ENCODE measurements at regions of chr3 and their contacts with region 1.

Region 1: DNA sequence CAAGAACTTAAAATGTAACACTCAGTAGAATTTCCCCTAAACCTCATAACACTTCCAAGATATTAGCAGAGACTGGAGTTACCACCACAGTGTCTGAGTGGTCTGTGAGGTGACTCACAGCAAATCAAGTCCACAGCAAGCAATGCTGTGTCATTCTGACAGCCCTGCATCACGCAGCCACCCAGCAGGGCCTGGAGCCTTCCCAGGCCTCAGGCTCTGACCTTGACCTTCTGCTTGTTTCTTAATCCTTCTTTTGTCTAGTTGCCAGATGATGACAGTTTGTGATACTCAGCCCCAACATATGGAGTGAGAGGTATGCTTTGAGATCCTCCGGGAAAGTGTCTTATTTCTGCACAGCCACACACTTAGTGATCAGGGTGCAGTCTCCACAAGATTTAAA is 82.5 kb downstream of the TOP2B start:
- DNase-seq: peak; percentile 37
- H3K4me3 ChIP-seq: no peak overlapping the region
- CTCF ChIP-seq: no peak

Region 2: GRCh38 chr3:24686808-24687207 is 895.4 kb before region 1 on chr3:
- in situ Hi-C with region 1: loop called (anchors 5 kb)
- DNase-seq: peak; percentile 79
- H3K4me3 ChIP-seq: no peak overlapping the region
- CTCF ChIP-seq: no peak

Region 3: GRCh38 chr3:25433868-25434267 is 148.4 kb before region 1 on chr3:
- in situ Hi-C with region 1: loop called (anchors 10 kb)
- DNase-seq: no peak
- H3K4me3 ChIP-seq: no peak overlapping the region
- CTCF ChIP-seq: no peak

Region 4: GRCh38 chr3:25493786-25494185 is 88.5 kb before region 1 on chr3:
- in situ Hi-C with region 1: no loop called
- DNase-seq: peak; percentile 57
- H3K4me3 ChIP-seq: no peak overlapping the region
- CTCF ChIP-seq: no peak